GM12878 (cell line): ENCODE measurements at regions of chr9 and their contacts with region 1.

Region 1: GRCh38 chr9:4939118-4939561 is 45.9 kb upstream of the JAK2 start:
- DNase-seq: peak; percentile 93
- ATAC-seq: peak; percentile 92
- H3K4me3 ChIP-seq: no peak overlapping the region
- H3K27ac ChIP-seq: peak overlapping the region; percentile 78
- H3K4me1 ChIP-seq: peaks cover 52% of the 10 kb centered on the region
- H3K27me3 ChIP-seq: no peaks in the 10 kb centered on the region
- CTCF ChIP-seq: no peak
- EP300 ChIP-seq: peak; percentile 83 to 86
- POLR2A ChIP-seq: no peak
- RAD21 ChIP-seq: no peak

Region 2: GRCh38 chr9:4814913-4815312 is 124.2 kb before region 1 on chr9:
- CTCF ChIA-PET with region 1: interaction called, 4 read pairs
- POLR2A ChIA-PET with region 1: no interaction called
- RAD21 ChIA-PET with region 1: no interaction called
- SMC1A ChIA-PET with region 1: interaction called, 4 read pairs
- in situ Hi-C with region 1: no loop called
- intact Hi-C with region 1: loop called (anchors 5 kb)
- DNase-seq: peak; percentile 77
- ATAC-seq: peak; percentile 74
- H3K4me3 ChIP-seq: peak overlapping the region; percentile 25; the same call in 1 of the 2 replicates
- H3K27ac ChIP-seq: peak overlapping the region; percentile 79
- H3K4me1 ChIP-seq: peaks cover 23% of the 10 kb centered on the region
- H3K27me3 ChIP-seq: no peaks in the 10 kb centered on the region
- CTCF ChIP-seq: no peak
- EP300 ChIP-seq: peak in 1 of 2 experiments; percentile 51; a peak in 2 of 4 replicates
- POLR2A ChIP-seq: no peak
- RAD21 ChIP-seq: no peak

Region 3: DNA sequence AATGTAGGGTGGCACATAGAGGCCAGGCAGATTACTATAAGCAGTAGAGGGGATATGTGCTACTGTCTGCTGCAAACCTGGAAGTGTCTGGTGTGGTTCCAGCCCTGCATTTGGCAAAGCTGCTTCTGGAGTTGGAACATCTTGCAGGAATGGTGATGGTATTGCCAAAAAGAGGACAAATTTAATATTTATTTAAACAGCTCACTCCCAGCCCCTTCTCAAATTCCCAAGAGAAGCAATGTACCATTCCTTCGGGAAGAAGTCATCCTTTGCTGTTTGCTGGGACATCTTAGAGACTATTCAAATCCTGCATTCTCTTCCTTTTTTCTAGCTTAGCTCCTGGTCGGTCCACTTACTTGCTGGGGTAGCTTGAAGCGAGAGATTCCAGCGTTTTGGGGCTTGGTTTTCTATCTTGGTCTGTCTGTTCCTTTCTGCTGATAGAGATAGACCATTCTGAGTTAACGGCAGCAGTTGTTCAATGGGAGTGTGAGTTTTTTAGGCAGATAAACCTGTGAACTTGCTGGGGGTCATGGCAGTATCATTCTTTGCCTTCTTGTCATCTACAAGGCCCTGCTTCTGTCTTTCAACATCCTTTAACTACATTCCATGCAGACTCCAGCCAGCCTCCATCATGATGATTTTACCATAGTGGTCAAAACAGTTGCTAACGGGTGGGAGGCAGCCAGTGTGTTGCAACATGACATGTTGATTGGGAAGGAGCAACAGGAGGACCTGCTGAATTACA is 76.5 kb before region 1 on chr9:
- CTCF ChIA-PET with region 1: no interaction called
- POLR2A ChIA-PET with region 1: no interaction called
- RAD21 ChIA-PET with region 1: no interaction called
- SMC1A ChIA-PET with region 1: no interaction called
- in situ Hi-C with region 1: no loop called
- intact Hi-C with region 1: no loop called
- DNase-seq: no peak
- ATAC-seq: no peak
- H3K4me3 ChIP-seq: no peak overlapping the region
- H3K27ac ChIP-seq: no peak overlapping the region
- H3K4me1 ChIP-seq: no peaks in the 10 kb centered on the region
- H3K27me3 ChIP-seq: no peaks in the 10 kb centered on the region
- CTCF ChIP-seq: no peak
- EP300 ChIP-seq: no peak
- POLR2A ChIP-seq: no peak
- RAD21 ChIP-seq: no peak

Region 4: DNA sequence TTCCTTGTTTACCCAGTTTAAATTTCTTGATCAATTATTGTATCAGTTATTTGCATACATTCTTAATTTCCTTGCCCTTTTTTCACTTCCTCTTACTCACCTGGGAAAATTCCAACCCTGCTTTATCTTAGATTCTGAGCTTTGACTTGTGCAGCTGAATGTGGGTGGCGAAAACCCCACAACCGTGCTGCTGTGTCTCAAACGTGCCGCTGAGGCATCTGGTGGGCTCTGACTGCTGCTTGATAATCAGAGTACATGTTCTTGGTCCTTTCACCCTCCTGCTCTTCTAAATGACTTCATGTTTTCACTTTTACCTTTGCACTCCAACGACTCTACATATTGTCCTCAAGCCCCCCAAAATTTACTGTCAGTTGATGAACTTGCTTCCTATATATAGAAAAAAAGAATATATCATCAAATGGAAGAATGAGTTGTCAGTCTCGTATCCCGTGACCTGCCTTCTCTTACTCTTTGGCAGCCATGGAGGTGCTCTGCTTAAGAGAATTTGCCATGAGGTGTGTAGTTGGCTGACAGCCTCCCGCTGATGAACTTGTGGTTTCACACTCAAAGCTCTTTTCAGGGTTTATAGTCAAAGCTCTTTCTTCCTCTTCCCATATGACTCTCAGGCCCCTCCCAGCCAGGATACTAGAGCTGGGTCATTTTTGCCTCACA is 32.0 kb after region 1 on chr9:
- CTCF ChIA-PET with region 1: interaction called, 15 read pairs
- POLR2A ChIA-PET with region 1: interaction called, 10 read pairs
- RAD21 ChIA-PET with region 1: interaction called, 43 read pairs
- SMC1A ChIA-PET with region 1: interaction called, 66 read pairs
- in situ Hi-C with region 1: no loop called
- intact Hi-C with region 1: loop called (anchors 1 kb)
- DNase-seq: peak; percentile 76
- ATAC-seq: peak; percentile 95
- H3K4me3 ChIP-seq: peak overlapping the region; percentile 50; the same call in 1 of the 2 replicates
- H3K27ac ChIP-seq: peak overlapping the region; percentile 50
- H3K4me1 ChIP-seq: peaks cover 17% of the 10 kb centered on the region
- H3K27me3 ChIP-seq: no peaks in the 10 kb centered on the region
- CTCF ChIP-seq: no peak
- EP300 ChIP-seq: peak; percentile 36 to 64; a peak in 3 of 4 replicates
- POLR2A ChIP-seq: no peak
- RAD21 ChIP-seq: no peak